Esophagus muscularis mucosa (tissue), 4 donors: ENCODE measurements at regions of chr19 and their contacts with region 1.

Region 1: GRCh38 chr19:21396893-21397572 is at the start of gene ZNF493:
- DNase-seq: peak; percentile 98
- H3K4me3 ChIP-seq: peak within 1 kb of the TSS; percentile 68 to 85 (median 80)
- H3K27ac ChIP-seq: peak within 1 kb of the TSS; percentile 81 to 93 (median 87)
- H3K4me1 ChIP-seq: peaks cover 12 to 47% (median 41%) of the 10 kb centered on the region in 4 donors
- H3K27me3 ChIP-seq: no peaks in the 10 kb centered on the region
- CTCF ChIP-seq: no peak
- EP300 ChIP-seq: no peak
- POLR2A ChIP-seq: no peak
- total RNA-seq, gene ZNF493: 12.1 to 29.1 (median 19.1) TPM

Region 2: GRCh38 chr19:21328885-21329605 is 68.0 kb before region 1 on chr19 and contains the start of gene ZNF708:
- intact Hi-C with region 1: loop called (anchors 2 kb)
- DNase-seq: peak; percentile 96
- H3K4me3 ChIP-seq: peak within 1 kb of the TSS; percentile 70 to 92 (median 80)
- H3K27ac ChIP-seq: peak within 1 kb of the TSS; percentile 93 to 98 (median 97)
- H3K4me1 ChIP-seq: peaks cover 12 to 23% (median 20%) of the 10 kb centered on the region in 4 donors
- H3K27me3 ChIP-seq: no peaks in the 10 kb centered on the region
- CTCF ChIP-seq: no peak
- EP300 ChIP-seq: no peak
- POLR2A ChIP-seq: peak; percentile 28
- total RNA-seq, gene ZNF708: 5.2 to 15.8 (median 8.4) TPM

Region 3: DNA sequence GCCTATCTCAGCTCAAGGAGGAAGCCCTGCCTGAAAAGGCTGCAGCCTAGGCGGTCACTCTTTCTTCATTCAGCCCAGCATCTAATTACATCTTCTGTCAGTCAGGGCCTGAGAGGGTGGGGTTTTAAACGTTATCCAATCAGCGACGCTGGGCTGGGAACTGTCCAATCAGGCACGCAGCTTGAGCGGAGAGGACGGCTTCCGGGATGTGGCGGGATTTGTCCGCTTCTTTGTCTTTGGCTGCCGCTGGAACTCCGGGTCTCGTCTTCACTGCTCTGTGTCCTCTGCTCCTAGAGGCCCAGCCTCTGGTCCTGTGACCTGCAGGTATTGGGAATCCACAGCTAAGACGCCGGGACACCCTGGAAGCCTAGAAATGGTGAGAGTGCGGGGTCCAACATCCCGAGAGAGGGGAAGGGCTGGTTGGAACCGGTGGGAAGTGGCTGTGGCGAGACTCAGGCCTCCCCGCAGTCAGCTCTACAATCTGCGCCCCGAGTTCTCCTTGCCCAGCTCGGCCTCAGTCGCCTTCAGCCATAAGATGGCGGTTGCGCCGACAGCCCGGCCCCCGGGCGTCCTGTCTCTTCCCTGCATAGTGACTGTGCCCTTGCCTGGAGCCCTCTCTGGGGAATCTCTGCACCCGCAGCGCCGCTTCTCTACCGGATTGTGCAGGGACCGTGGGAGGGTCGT is 38.1 kb before region 1 on chr19 and contains the start of gene ZNF738:
- intact Hi-C with region 1: loop called (anchors 2 kb)
- DNase-seq: peak; percentile 98
- H3K4me3 ChIP-seq: peak within 1 kb of the TSS; percentile 73 to 84 (median 78)
- H3K27ac ChIP-seq: peak within 1 kb of the TSS; percentile 78 to 90 (median 82)
- H3K4me1 ChIP-seq: peaks cover 0 to 17% (median 12%) of the 10 kb centered on the region in 4 donors
- H3K27me3 ChIP-seq: no peaks in the 10 kb centered on the region
- CTCF ChIP-seq: no peak
- EP300 ChIP-seq: no peak
- POLR2A ChIP-seq: no peak
- total RNA-seq, gene ZNF738: 2.7 to 4.8 (median 3.0) TPM

Region 4: GRCh38 chr19:21492947-21493906 is 96.2 kb after region 1 on chr19:
- intact Hi-C with region 1: no loop called
- DNase-seq: no peak
- H3K4me3 ChIP-seq: no peak overlapping the region
- H3K27ac ChIP-seq: no peak overlapping the region
- H3K4me1 ChIP-seq: no peaks in the 10 kb centered on the region
- H3K27me3 ChIP-seq: no peaks in the 10 kb centered on the region
- CTCF ChIP-seq: no peak
- EP300 ChIP-seq: no peak
- POLR2A ChIP-seq: no peak